ENCODE measurements at regions of chrX and their contacts with region 1.

Region 1: GRCh38 chrX:103941201-103941975 is 21.0 kb upstream of the TMSB15B start:
- H3K4me3 Mint-ChIP-seq: no peak overlapping the region
- H3K27ac Mint-ChIP-seq: no peak overlapping the region
- H3K4me1 Mint-ChIP-seq: no peaks in the 10 kb centered on the region
- H3K27me3 Mint-ChIP-seq: no peaks in the 10 kb centered on the region

Region 2: GRCh38 chrX:103442536-103442901 is 498.9 kb before region 1 on chrX:
- intact Hi-C with region 1: no loop called
- H3K4me3 Mint-ChIP-seq: no peak overlapping the region
- H3K27ac Mint-ChIP-seq: no peak overlapping the region
- H3K4me1 Mint-ChIP-seq: no peaks in the 10 kb centered on the region
- H3K27me3 Mint-ChIP-seq: no peaks in the 10 kb centered on the region

Region 3: GRCh38 chrX:103845165-103845653 is 96.2 kb before region 1 on chrX:
- intact Hi-C with region 1: loop called (anchors 1 kb)
- H3K4me3 Mint-ChIP-seq: no peak overlapping the region
- H3K27ac Mint-ChIP-seq: no peak overlapping the region
- H3K4me1 Mint-ChIP-seq: no peaks in the 10 kb centered on the region
- H3K27me3 Mint-ChIP-seq: no peaks in the 10 kb centered on the region

Measured in dendritic cell treated with granulocyte-macrophage colony-stimulating factor and Interleukin-4, amounts not matched to agents 40 ng/mL and 50 ng/mL, for 4 days (primary cell).